ENCODE measurements at regions of chr14 and their contacts with region 1.

Region 1: GRCh38 chr14:38138473-38139138 is 69.1 kb upstream of the SSTR1 start:
- DNase-seq: no peak
- ATAC-seq: no peak
- H3K4me3 ChIP-seq: no peak overlapping the region
- H3K4me3 Mint-ChIP-seq: no peak overlapping the region
- H3K27ac ChIP-seq: no peak overlapping the region
- H3K27ac Mint-ChIP-seq: no peak overlapping the region
- H3K4me1 ChIP-seq: no peaks in the 10 kb centered on the region
- H3K4me1 Mint-ChIP-seq: peaks cover 0 to 7% (median 0%) of the 10 kb centered on the region in 7 donors
- H3K27me3 ChIP-seq: no peaks in the 10 kb centered on the region
- H3K27me3 Mint-ChIP-seq: peaks cover 0 to 2% (median 0%) of the 10 kb centered on the region in 5 donors

Region 2: GRCh38 chr14:38089123-38089522 is 49.5 kb before region 1 on chr14:
- CTCF ChIA-PET with region 1: no interaction called
- POLR2A ChIA-PET with region 1: no interaction called
- intact Hi-C with region 1: loop called in 1 of 2 experiments (anchors 5 kb)
- DNase-seq: no peak
- ATAC-seq: no peak
- H3K4me3 ChIP-seq: peak overlapping the region; percentile 59
- H3K4me3 Mint-ChIP-seq: peak overlapping the region in 9 of 10 donors; percentile 62 to 91 (median 82)
- H3K27ac ChIP-seq: peak overlapping the region; percentile 64
- H3K27ac Mint-ChIP-seq: peak overlapping the region in 8 of 9 donors; percentile 77 to 97 (median 88)
- H3K4me1 ChIP-seq: peaks cover 4 to 27% of the 10 kb centered on the region in 2 donors
- H3K4me1 Mint-ChIP-seq: peaks cover 0 to 56% (median 22%) of the 10 kb centered on the region in 7 donors
- H3K27me3 ChIP-seq: no peaks in the 10 kb centered on the region
- H3K27me3 Mint-ChIP-seq: no peaks in the 10 kb centered on the region